Heart right ventricle (tissue), 16 donors: ENCODE measurements at regions of chr21 and their contacts with region 1.

Region 1: DNA sequence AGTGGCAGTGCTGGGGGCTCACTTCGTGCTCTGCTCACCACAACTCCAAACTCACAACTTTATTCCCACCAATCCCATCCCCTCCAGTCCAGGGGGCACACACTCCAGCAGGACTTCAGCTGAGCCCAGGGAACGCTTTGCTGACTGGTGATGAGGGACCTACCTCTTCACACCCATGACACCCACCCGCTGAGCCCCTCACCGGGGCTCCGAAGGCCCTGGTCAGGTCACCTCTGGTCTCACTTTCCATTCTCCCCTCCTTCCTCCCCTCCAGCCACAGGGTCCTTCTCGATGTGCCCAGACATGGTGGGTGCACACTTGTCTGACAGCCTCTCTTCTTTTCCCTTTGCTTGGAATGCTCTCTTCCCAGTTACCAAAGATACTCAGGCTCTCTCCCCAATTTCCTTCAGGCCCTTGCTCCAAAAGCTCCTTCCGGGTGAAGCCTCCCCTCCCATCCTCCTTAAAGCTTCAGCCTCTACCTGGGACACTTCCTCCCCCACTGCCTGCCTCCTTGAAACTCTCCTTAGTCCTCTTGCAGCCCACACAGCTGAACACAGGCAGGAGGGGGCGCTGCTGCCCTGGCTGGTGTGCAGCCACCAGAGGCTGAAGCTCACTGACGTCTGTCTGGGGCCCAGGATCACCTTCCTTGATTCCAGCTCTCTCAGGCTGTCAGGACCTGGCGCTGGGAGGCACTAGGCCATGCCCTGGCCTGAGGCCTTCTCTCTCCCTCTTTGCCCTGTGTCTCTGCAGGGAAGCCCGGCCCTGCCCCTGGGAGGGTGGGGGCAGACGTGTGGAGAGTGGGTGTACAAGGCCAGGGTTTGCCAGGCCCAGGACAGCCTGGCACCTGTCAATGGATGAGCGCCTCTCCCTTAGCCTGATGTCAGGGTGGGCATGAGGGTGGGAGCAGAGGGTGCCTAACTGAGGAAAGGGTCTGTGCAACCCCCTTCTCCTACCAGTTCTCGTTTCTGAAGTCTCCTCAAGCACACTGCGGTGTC is 1.6 kb downstream of the KCNE1 start:
- DNase-seq: peak; percentile 81 to 84
- ATAC-seq: peak; percentile 86 to 96 (median 90)
- H3K4me3 ChIP-seq: peak overlapping the region in 1 of 10 donors; percentile 50
- H3K27ac ChIP-seq: peak overlapping the region in 5 of 10 donors; percentile 39 to 87 (median 43)
- H3K4me1 ChIP-seq: peaks cover 0 to 40% (median 10%) of the 10 kb centered on the region in 9 donors
- H3K27me3 ChIP-seq: no peaks in the 10 kb centered on the region
- CTCF ChIP-seq: peak; percentile 56 to 88 (median 83)

Region 2: GRCh38 chr21:34582506-34583150 is 72.2 kb after region 1 on chr21:
- intact Hi-C with region 1: loop called in 2 of 10 experiments (anchors 2 kb)
- DNase-seq: peak; percentile 34 to 38
- ATAC-seq: peak; percentile 68 to 87 (median 72)
- H3K4me3 ChIP-seq: no peak overlapping the region
- H3K27ac ChIP-seq: peak overlapping the region; percentile 16 to 92 (median 70)
- H3K4me1 ChIP-seq: peaks cover 27 to 66% (median 43%) of the 10 kb centered on the region in 9 donors
- H3K27me3 ChIP-seq: no peaks in the 10 kb centered on the region
- CTCF ChIP-seq: peak in 8 of 9 donors; percentile 18 to 58 (median 44)

Region 3: GRCh38 chr21:34603002-34603709 is 92.7 kb after region 1 on chr21:
- intact Hi-C with region 1: loop called in 1 of 10 experiments (anchors 1 kb)
- DNase-seq: peak; percentile 81 to 86
- ATAC-seq: peak; percentile 89 to 97 (median 96)
- H3K4me3 ChIP-seq: no peak overlapping the region
- H3K27ac ChIP-seq: peak overlapping the region in 3 of 10 donors; percentile 36 to 52 (median 50)
- H3K4me1 ChIP-seq: peaks cover 0 to 15% (median 8%) of the 10 kb centered on the region in 9 donors
- H3K27me3 ChIP-seq: no peaks in the 10 kb centered on the region
- CTCF ChIP-seq: peak; percentile 52 to 89 (median 85)

Region 4: GRCh38 chr21:34630536-34631143 is 120.2 kb after region 1 on chr21:
- intact Hi-C with region 1: loop called in 1 of 10 experiments (anchors 1 kb)
- DNase-seq: peak in 1 of 2 donors; percentile 38
- ATAC-seq: peak in 7 of 8 donors; percentile 52 to 81 (median 72)
- H3K4me3 ChIP-seq: no peak overlapping the region
- H3K27ac ChIP-seq: no peak overlapping the region
- H3K4me1 ChIP-seq: peaks cover 0 to under 1% (median 0%) of the 10 kb centered on the region in 9 donors
- H3K27me3 ChIP-seq: peaks cover 0 to 22% (median 7%) of the 10 kb centered on the region in 7 donors
- CTCF ChIP-seq: peak; percentile 59 to 87 (median 83)